PC-3 (cell line): ENCODE measurements at regions of chr11 and their contacts with region 1.

Region 1: DNA sequence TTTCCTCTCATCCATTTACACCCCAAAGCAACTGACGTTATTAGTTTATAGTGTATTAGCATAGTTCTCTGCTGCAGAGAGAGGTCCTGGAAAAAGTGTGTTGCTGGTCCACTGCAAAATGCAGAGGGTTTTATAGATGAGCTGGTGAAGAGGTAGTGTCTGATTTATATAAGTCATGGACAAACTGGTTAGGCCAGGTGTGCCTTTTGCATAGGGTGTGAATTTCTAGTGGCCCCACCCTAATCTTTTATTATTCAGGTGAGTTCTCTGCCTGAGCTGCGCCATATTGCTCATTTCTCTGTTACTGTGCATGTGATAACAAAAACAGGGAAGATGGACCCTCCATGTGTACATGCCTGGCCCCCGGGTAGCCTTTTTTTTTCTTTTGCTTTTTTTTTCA is 43.1 kb upstream of the TRIM77 start:
- DNase-seq: peak; percentile 25
- ATAC-seq: no peak
- H3K4me3 ChIP-seq: no peak overlapping the region
- H3K27ac ChIP-seq: no peak overlapping the region
- H3K4me1 ChIP-seq: no peaks in the 10 kb centered on the region
- H3K27me3 ChIP-seq: peaks cover 5% of the 10 kb centered on the region; the same call in 1 of the 2 replicates
- CTCF ChIP-seq: no peak

Region 2: DNA sequence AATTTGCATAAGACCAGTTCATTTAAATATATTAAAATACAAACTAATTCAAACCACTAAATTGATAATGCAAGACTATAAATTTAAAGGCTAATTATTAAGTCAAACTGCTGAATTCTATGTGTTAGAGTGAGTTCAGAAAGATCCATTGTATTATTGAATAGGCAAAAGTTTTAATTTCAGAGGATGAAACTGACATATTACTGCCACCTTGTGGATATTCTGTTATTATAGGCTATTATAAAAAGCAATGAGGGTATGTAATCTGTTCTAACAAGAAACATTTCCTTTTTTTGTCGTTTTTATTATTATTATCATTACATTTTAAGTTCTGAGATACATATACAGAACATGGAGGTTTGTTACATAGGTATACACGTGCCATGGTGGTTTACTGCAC is 446.5 kb after region 1 on chr11:
- CTCF ChIA-PET with region 1: no interaction called
- POLR2A ChIA-PET with region 1: no interaction called
- intact Hi-C with region 1: loop called (anchors 10 kb)
- DNase-seq: peak; percentile 48
- ATAC-seq: no peak
- H3K4me3 ChIP-seq: no peak overlapping the region
- H3K27ac ChIP-seq: no peak overlapping the region
- H3K4me1 ChIP-seq: no peaks in the 10 kb centered on the region
- H3K27me3 ChIP-seq: peaks cover 24% of the 10 kb centered on the region
- CTCF ChIP-seq: peak; percentile 59; the same call in 1 of the 2 replicates